ENCODE measurements at regions of chr1 and their contacts with region 1.

Region 1: GRCh38 chr1:40849801-40850592 is 12.2 kb downstream of the CITED4 start:
- DNase-seq: peak; percentile 57 to 61
- ATAC-seq: peak; percentile 83 to 91
- H3K4me3 ChIP-seq: no peak overlapping the region
- H3K27ac ChIP-seq: peak overlapping the region; percentile 44 to 52; a peak in 3 of 6 replicates
- H3K4me1 ChIP-seq: peaks cover 13% of the 10 kb centered on the region; the same call in 2 of the 3 replicates
- CTCF ChIP-seq: peak; percentile 74
- EP300 ChIP-seq: no peak
- POLR2A ChIP-seq: no peak
- RAD21 ChIP-seq: peak; percentile 66 to 74

Region 2: GRCh38 chr1:40774266-40774998 is 75.6 kb before region 1 on chr1:
- CTCF ChIA-PET with region 1: interaction called, 39 read pairs
- POLR2A ChIA-PET with region 1: interaction called, 3 read pairs
- DNase-seq: peak; percentile 18 to 48
- ATAC-seq: peak; percentile 74 to 87; a peak in 5 of 6 replicates
- H3K4me3 ChIP-seq: no peak overlapping the region
- H3K27ac ChIP-seq: no peak overlapping the region
- H3K4me1 ChIP-seq: no peaks in the 10 kb centered on the region
- CTCF ChIP-seq: peak; percentile 60
- EP300 ChIP-seq: no peak
- POLR2A ChIP-seq: no peak
- RAD21 ChIP-seq: peak; percentile 35 to 39; a peak in 3 of 5 replicates

Region 3: GRCh38 chr1:40825996-40826395 is 24.0 kb before region 1 on chr1:
- CTCF ChIA-PET with region 1: interaction called, 23 read pairs
- POLR2A ChIA-PET with region 1: no interaction called
- DNase-seq: no peak
- ATAC-seq: no peak
- H3K4me3 ChIP-seq: no peak overlapping the region
- H3K27ac ChIP-seq: peak overlapping the region; percentile 19 to 81; a peak in 3 of 6 replicates
- H3K4me1 ChIP-seq: peaks cover 22% of the 10 kb centered on the region
- CTCF ChIP-seq: no peak
- EP300 ChIP-seq: no peak
- POLR2A ChIP-seq: no peak
- RAD21 ChIP-seq: no peak

Region 4: GRCh38 chr1:40833979-40834378 is 16.0 kb before region 1 on chr1:
- CTCF ChIA-PET with region 1: interaction called, 23 read pairs
- POLR2A ChIA-PET with region 1: no interaction called
- DNase-seq: no peak
- ATAC-seq: no peak
- H3K4me3 ChIP-seq: no peak overlapping the region
- H3K27ac ChIP-seq: no peak overlapping the region
- H3K4me1 ChIP-seq: no peaks in the 10 kb centered on the region
- CTCF ChIP-seq: no peak
- EP300 ChIP-seq: no peak
- POLR2A ChIP-seq: no peak
- RAD21 ChIP-seq: no peak

Region 5: DNA sequence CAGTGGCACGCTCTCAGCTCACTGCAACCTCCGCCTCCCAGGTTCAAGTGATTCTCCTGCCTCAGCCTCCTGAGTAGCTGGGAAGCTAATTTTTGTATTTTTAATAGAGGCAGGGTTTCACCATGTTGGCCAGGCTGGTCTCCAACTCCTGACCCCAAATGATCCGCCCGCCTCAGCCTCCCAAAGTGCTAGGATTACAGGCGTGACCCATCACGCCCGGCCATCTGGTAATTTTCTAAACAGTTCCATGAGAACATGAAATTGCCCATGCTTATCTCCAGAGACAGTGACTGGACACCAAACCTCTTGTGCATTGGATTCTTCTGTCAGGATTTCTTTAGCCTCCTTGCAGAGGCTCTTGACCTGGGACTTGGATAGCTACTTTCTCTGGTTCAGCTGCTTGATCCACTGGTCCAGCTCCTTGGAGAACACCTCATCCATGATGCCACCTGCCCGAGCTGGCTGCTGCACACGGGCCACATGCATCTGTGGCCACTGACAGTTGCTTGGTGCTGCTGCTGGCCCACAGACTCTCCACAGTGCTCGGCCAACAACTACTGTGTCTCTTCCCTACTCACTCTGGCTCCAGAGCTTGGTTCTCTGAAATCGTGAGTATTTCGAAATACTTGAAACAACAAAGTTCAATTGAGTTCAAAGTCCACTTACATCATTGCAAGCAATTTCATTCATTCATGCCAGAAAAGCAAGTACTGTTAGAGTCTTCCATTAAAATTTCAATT is 89.5 kb after region 1 on chr1:
- CTCF ChIA-PET with region 1: interaction called, 25 read pairs
- POLR2A ChIA-PET with region 1: no interaction called
- DNase-seq: peak in 1 of 2 experiments; percentile 69
- ATAC-seq: peak; percentile 83 to 88
- H3K4me3 ChIP-seq: no peak overlapping the region
- H3K27ac ChIP-seq: peak overlapping the region; percentile 84 to 94
- H3K4me1 ChIP-seq: peaks cover 52% of the 10 kb centered on the region
- CTCF ChIP-seq: no peak
- EP300 ChIP-seq: no peak
- POLR2A ChIP-seq: no peak
- RAD21 ChIP-seq: no peak

Measured in A549 (cell line).